CD8-positive, alpha-beta memory T cell (primary cell): ENCODE measurements at regions of chr2 and their contacts with region 1.

Region 1: GRCh38 chr2:232292395-232293154 is 86.0 kb upstream of the ALPP start:
- DNase-seq: peak in 3 of 5 donors; percentile 15 to 58 (median 32)
- H3K4me3 ChIP-seq: no peak overlapping the region
- H3K4me3 Mint-ChIP-seq: no peak overlapping the region
- H3K27ac ChIP-seq: no peak overlapping the region
- H3K27ac Mint-ChIP-seq: peak overlapping the region in 3 of 8 donors; percentile 20 to 60 (median 59)
- H3K4me1 ChIP-seq: peaks cover 9% of the 10 kb centered on the region
- H3K4me1 Mint-ChIP-seq: peaks cover 5 to 10% (median 7%) of the 10 kb centered on the region in 3 donors
- H3K27me3 ChIP-seq: no peaks in the 10 kb centered on the region
- H3K27me3 Mint-ChIP-seq: no peaks in the 10 kb centered on the region

Region 2: DNA sequence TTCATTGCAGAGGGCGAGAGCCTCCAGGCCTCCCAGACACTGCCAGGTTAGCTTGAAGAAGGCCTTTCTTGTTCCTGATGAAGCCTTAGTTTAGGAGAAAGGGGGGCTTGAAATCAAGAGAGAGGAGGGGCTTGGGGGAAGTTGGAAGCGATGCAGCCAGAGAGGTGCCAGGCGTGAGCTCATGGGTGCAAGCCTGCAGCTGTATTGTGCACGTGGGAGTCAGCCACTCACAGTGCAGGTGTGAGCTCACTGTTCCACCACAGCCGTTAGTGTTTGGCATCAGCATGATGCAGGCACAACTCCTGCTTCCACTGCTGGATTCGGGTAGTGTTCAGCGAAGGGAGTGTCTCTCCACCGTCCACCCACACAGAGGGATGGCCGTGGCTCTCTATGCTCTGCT is 17.5 kb after region 1 on chr2:
- CTCF ChIA-PET with region 1: interaction called, 20 read pairs
- POLR2A ChIA-PET with region 1: no interaction called
- DNase-seq: peak in 4 of 5 donors; percentile 20 to 77 (median 46)
- H3K4me3 ChIP-seq: peak overlapping the region; percentile 11
- H3K4me3 Mint-ChIP-seq: peak overlapping the region in 6 of 7 donors; percentile 69 to 90 (median 74)
- H3K27ac ChIP-seq: peak overlapping the region; percentile 55
- H3K27ac Mint-ChIP-seq: peak overlapping the region; percentile 83 to 97 (median 94)
- H3K4me1 ChIP-seq: peaks cover 58% of the 10 kb centered on the region
- H3K4me1 Mint-ChIP-seq: peaks cover 71 to 85% (median 79%) of the 10 kb centered on the region in 3 donors
- H3K27me3 ChIP-seq: no peaks in the 10 kb centered on the region
- H3K27me3 Mint-ChIP-seq: no peaks in the 10 kb centered on the region

Region 3: GRCh38 chr2:232315049-232315922 is 22.7 kb after region 1 on chr2:
- CTCF ChIA-PET with region 1: interaction called, 20 read pairs
- POLR2A ChIA-PET with region 1: no interaction called
- DNase-seq: peak; percentile 57 to 86 (median 81)
- H3K4me3 ChIP-seq: peak overlapping the region; percentile 41
- H3K4me3 Mint-ChIP-seq: peak overlapping the region; percentile 1 to 88 (median 77)
- H3K27ac ChIP-seq: peak overlapping the region; percentile 22
- H3K27ac Mint-ChIP-seq: peak overlapping the region; percentile 85 to 97 (median 93)
- H3K4me1 ChIP-seq: peaks cover 90% of the 10 kb centered on the region
- H3K4me1 Mint-ChIP-seq: peaks cover 80 to 96% (median 96%) of the 10 kb centered on the region in 3 donors
- H3K27me3 ChIP-seq: no peaks in the 10 kb centered on the region
- H3K27me3 Mint-ChIP-seq: no peaks in the 10 kb centered on the region

Region 4: GRCh38 chr2:232321156-232321816 is 28.7 kb after region 1 on chr2:
- CTCF ChIA-PET with region 1: interaction called, 20 read pairs
- POLR2A ChIA-PET with region 1: no interaction called
- DNase-seq: peak in 4 of 5 donors; percentile 23 to 67 (median 34)
- H3K4me3 ChIP-seq: no peak overlapping the region
- H3K4me3 Mint-ChIP-seq: no peak overlapping the region
- H3K27ac ChIP-seq: no peak overlapping the region
- H3K27ac Mint-ChIP-seq: peak overlapping the region; percentile 60 to 91 (median 77)
- H3K4me1 ChIP-seq: peaks cover 72% of the 10 kb centered on the region
- H3K4me1 Mint-ChIP-seq: peaks cover 44 to 69% (median 60%) of the 10 kb centered on the region in 3 donors
- H3K27me3 ChIP-seq: no peaks in the 10 kb centered on the region
- H3K27me3 Mint-ChIP-seq: no peaks in the 10 kb centered on the region

Region 5: GRCh38 chr2:232487385-232488096 is 195.0 kb after region 1 on chr2 and contains the start of gene ECEL1:
- CTCF ChIA-PET with region 1: no interaction called
- POLR2A ChIA-PET with region 1: no interaction called
- DNase-seq: no peak
- H3K4me3 ChIP-seq: no peak within 1 kb of the TSS
- H3K4me3 Mint-ChIP-seq: peak within 1 kb of the TSS in 5 of 7 donors; percentile 15 to 74 (median 64)
- H3K27ac ChIP-seq: no peak within 1 kb of the TSS
- H3K27ac Mint-ChIP-seq: no peak within 1 kb of the TSS
- H3K4me1 ChIP-seq: no peaks in the 10 kb centered on the region
- H3K4me1 Mint-ChIP-seq: peaks cover 3 to 15% (median 5%) of the 10 kb centered on the region in 3 donors
- H3K27me3 ChIP-seq: no peaks in the 10 kb centered on the region
- H3K27me3 Mint-ChIP-seq: peaks cover 23 to 53% of the 10 kb centered on the region in 2 donors
- total RNA-seq, gene ECEL1: not detected